HAP-1 (cell line): ENCODE measurements at regions of chr11 and their contacts with region 1.

Region 1: GRCh38 chr11:93234602-93235207 is 36.9 kb upstream of the SLC36A4 start:
- DNase-seq: peak; percentile 55 to 81
- H3K4me3 ChIP-seq: no peak overlapping the region
- H3K4me1 ChIP-seq: no peaks in the 10 kb centered on the region
- H3K27me3 ChIP-seq: 0 out of 2 replicates have a peak, but pooled peaks cover 2% of the 10 kb centered on the region

Region 2: GRCh38 chr11:93512073-93512475 is 277.4 kb after region 1 on chr11:
- in situ Hi-C with region 1: no loop called
- DNase-seq: no peak
- H3K4me3 ChIP-seq: no peak overlapping the region
- H3K4me1 ChIP-seq: no peaks in the 10 kb centered on the region
- H3K27me3 ChIP-seq: no peaks in the 10 kb centered on the region

Region 3: GRCh38 chr11:93543292-93543977 is 308.7 kb after region 1 on chr11 and contains the start of gene SMCO4:
- in situ Hi-C with region 1: loop called (anchors 10 kb)
- DNase-seq: peak; percentile 74 to 90
- H3K4me3 ChIP-seq: peak within 1 kb of the TSS; percentile 58
- H3K4me1 ChIP-seq: no peaks in the 10 kb centered on the region; the same call in 1 of the 2 replicates
- H3K27me3 ChIP-seq: no peaks in the 10 kb centered on the region

Region 4: DNA sequence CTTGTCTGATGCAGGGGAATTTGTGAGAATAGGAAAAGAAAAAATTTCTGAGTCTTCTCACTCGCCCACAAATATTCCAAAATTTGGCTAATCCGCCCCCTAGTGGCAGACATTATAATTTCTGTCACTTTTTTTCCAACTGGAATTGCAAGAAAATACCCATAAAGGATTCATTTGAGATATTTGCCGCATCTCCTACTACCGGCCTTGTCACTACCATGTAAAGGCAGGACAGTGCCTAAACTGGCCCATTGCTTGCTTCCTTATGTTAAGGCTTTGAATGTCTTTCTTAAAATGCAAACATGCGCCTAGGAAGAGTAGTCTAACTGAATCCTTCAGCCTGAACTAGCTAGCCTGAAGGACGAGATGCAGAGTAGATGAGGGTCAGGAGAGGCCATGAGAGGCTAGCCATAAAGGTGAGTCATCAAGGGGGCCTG is 417.5 kb after region 1 on chr11:
- in situ Hi-C with region 1: loop called (anchors 10 kb)
- DNase-seq: peak; percentile 44 to 65
- H3K4me3 ChIP-seq: no peak overlapping the region
- H3K4me1 ChIP-seq: no peaks in the 10 kb centered on the region
- H3K27me3 ChIP-seq: peaks cover 29% of the 10 kb centered on the region